ENCODE measurements at regions of chr3 and their contacts with region 1.

Region 1: GRCh38 chr3:186080849-186081438 is 27.9 kb downstream of the ETV5 start:
- DNase-seq: no peak
- ATAC-seq: no peak
- H3K4me3 ChIP-seq: no peak overlapping the region
- H3K27ac ChIP-seq: no peak overlapping the region
- H3K4me1 ChIP-seq: no peaks in the 10 kb centered on the region
- H3K27me3 ChIP-seq: no peaks in the 10 kb centered on the region
- CTCF ChIP-seq: no peak
- EP300 ChIP-seq: no peak
- POLR2A ChIP-seq: no peak
- RAD21 ChIP-seq: no peak

Region 2: GRCh38 chr3:185992831-185993374 is 88.0 kb before region 1 on chr3:
- CTCF ChIA-PET with region 1: no interaction called
- POLR2A ChIA-PET with region 1: no interaction called
- in situ Hi-C with region 1: no loop called
- intact Hi-C with region 1: no loop called
- DNase-seq: no peak
- ATAC-seq: no peak
- H3K4me3 ChIP-seq: no peak overlapping the region
- H3K27ac ChIP-seq: no peak overlapping the region
- H3K4me1 ChIP-seq: no peaks in the 10 kb centered on the region
- H3K27me3 ChIP-seq: peaks cover 19 to 29% of the 10 kb centered on the region in 2 experiments
- CTCF ChIP-seq: no peak
- EP300 ChIP-seq: no peak
- POLR2A ChIP-seq: no peak
- RAD21 ChIP-seq: no peak

Region 3: DNA sequence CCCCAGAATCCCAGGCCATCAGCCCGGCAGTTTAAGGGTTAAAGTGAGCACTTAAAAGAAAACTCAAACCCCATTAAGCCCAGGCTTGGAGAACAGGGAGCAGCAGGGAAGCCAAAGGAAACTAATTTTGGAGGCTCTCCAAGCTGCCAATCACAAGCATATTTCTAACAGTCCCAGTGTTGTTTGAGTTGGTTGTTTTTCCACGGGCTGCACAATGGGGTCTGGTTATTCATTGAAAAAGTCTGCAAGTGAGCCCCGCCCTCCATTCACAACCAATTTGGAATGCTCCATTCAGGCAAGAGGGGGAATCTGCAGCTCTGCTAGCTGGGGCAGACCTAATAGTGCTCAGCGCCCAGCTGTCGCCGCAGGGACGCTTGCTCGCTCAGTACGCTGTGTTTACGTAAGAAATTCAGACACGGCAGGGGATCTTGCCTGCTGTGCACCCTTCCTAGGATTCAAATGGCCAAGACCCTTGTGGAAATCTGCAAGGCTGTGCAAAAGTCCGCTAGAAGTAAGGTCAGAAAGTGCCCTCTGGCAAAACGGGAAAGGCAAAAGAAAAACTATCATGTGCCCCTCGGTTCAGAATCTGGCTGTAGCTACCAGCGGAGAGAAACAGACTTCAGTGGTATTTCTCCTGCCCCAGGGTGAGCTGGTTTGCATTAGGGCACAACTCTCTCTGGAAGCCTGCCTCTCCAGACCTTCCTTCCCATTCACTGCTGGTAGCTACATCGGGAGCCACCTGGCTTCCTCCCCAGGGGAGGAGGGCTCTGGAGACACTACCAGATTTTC is 16.9 kb after region 1 on chr3:
- CTCF ChIA-PET with region 1: no interaction called
- POLR2A ChIA-PET with region 1: interaction called, 15 read pairs
- in situ Hi-C with region 1: no loop called
- intact Hi-C with region 1: no loop called
- DNase-seq: peak; percentile 35 to 55 (median 48)
- ATAC-seq: peak; percentile 73
- H3K4me3 ChIP-seq: no peak overlapping the region
- H3K27ac ChIP-seq: no peak overlapping the region
- H3K4me1 ChIP-seq: peaks cover 15 to 23% of the 10 kb centered on the region in 2 experiments; a peak in 4 of 5 replicates
- H3K27me3 ChIP-seq: no peaks in the 10 kb centered on the region
- CTCF ChIP-seq: no peak
- EP300 ChIP-seq: no peak
- POLR2A ChIP-seq: no peak
- RAD21 ChIP-seq: no peak

Region 4: DNA sequence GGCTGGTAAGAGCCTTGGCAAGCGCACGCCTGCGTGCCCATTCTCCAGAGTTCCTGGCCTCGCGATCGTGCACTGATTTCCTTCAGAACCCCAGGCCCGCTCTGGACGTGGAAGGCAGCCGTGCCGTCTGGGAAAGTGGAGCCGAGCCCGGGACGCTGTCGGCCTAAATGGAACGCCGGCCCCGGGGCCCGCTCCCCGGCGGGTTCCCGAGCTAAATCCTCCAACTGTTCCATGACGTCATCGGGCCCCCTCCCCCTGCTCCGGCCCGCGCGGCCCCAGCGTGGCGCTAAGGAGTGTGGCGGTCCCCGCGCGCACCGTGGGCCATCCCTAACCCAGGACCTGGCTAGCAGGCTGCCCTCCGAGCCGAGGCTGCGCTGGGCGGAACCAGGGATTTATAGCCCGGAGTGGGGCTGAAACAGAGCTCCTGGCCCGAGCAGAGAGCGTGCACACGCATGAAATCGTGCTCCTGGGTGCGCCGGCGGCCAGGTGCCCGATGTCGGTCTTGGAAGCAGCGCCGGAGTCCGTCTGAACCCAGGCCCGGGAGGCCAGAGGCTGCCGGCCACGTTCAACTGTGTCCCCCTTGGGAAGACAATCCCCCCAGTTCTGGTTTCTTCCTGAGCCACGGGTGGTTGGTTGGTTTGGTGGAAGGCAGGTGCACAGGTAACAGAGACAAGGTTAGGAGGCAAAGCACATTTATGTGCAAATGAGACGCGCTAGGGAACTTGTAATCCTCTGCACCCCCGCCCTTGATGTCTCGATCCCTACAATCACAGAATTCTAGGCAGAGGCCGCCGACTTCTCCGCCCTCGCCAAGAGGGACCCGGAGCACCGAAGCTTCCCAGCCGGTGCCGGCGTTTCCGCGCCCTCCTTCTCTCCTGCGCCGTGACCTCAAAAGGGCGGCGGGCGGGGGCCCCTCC is 112.8 kb after region 1 on chr3:
- CTCF ChIA-PET with region 1: no interaction called
- POLR2A ChIA-PET with region 1: no interaction called
- in situ Hi-C with region 1: no loop called
- intact Hi-C with region 1: no loop called
- DNase-seq: no peak
- ATAC-seq: no peak; the same call in 2 of the 3 replicates
- H3K4me3 ChIP-seq: no peak overlapping the region
- H3K27ac ChIP-seq: no peak overlapping the region
- H3K4me1 ChIP-seq: peaks cover 0 to 10% of the 10 kb centered on the region in 2 experiments; a peak in 2 of 5 replicates
- H3K27me3 ChIP-seq: peaks cover 36 to 41% of the 10 kb centered on the region in 2 experiments
- CTCF ChIP-seq: no peak
- EP300 ChIP-seq: no peak
- POLR2A ChIP-seq: no peak
- RAD21 ChIP-seq: no peak